ENCODE measurements at regions of chr20 and their contacts with region 1.

Region 1: GRCh38 chr20:49982346-49983122 is at the start of gene SNAI1:
- DNase-seq: no peak
- H3K4me3 ChIP-seq: peak within 1 kb of the TSS; percentile 44 to 55
- H3K27ac ChIP-seq: peak within 1 kb of the TSS; percentile 55
- H3K4me1 ChIP-seq: peaks cover 58% of the 10 kb centered on the region
- H3K27me3 ChIP-seq: no peaks in the 10 kb centered on the region
- CTCF ChIP-seq: peak in 2 of 3 experiments; percentile 19 to 42
- POLR2A ChIP-seq: peak in 1 of 2 donors; percentile 76
- total RNA-seq, gene SNAI1: 19.9 TPM

Region 2: GRCh38 chr20:50070991-50071888 is 88.7 kb after region 1 on chr20:
- intact Hi-C with region 1: loop called (anchors 2 kb)
- DNase-seq: no peak
- H3K4me3 ChIP-seq: peak overlapping the region; percentile 4 to 35
- H3K27ac ChIP-seq: peak overlapping the region; percentile 33
- H3K4me1 ChIP-seq: peaks cover 16% of the 10 kb centered on the region
- H3K27me3 ChIP-seq: no peaks in the 10 kb centered on the region
- CTCF ChIP-seq: peak; percentile 99 to 100 (median 100)
- POLR2A ChIP-seq: no peak

Region 3: DNA sequence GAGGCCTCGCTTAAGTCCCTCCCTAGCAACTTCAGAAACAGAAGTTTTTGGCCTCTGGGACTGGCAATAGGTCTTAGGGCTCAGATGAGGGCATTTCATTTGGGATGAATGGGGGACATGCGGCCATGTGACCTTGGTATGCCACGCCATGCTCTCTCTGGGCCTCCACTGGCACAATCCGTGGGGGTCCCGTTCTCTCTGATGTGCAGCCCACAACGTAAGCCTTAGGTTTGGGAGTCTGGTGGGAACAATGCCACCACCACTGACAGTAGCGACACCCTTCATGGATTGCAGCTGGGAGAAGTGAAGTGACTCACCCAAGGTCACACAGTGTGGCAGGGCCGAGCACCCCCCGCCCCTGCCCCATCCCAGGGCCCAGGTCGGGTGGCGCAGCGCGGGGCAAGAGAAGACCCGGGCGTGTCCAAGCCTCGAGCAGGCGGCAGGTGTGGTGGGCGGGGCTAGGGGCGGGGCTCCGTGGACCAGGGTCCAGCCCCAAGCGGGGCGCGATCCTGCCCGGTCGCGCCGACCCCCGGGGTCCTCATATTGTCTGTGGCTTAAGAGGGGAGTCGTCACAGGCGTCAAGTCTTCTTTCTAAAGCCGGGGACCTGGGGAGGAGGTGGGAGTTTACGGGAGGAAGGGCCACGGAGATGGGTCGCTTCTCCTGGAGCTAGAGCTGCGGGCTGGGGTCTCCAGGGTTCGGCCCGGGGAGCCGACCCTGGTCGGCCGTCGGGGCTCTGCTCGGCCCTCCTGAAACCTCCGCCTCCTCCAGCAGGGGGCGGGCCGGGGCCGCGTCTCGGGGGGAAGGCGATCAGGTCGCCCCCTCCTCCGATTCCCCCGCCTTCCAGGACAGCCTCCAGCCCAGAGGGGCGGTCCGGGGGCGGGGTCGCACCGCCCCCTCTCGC is 207.4 kb after region 1 on chr20:
- intact Hi-C with region 1: no loop called
- DNase-seq: peak in 1 of 2 donors; percentile 93
- H3K4me3 ChIP-seq: peak overlapping the region; percentile 88 to 98
- H3K27ac ChIP-seq: peak overlapping the region; percentile 100
- H3K4me1 ChIP-seq: peaks cover 46% of the 10 kb centered on the region
- H3K27me3 ChIP-seq: no peaks in the 10 kb centered on the region
- CTCF ChIP-seq: peak; percentile 68 to 97 (median 86)
- POLR2A ChIP-seq: no peak

Region 4: GRCh38 chr20:50330050-50330966 is 347.8 kb after region 1 on chr20:
- intact Hi-C with region 1: no loop called
- DNase-seq: no peak
- H3K4me3 ChIP-seq: no peak overlapping the region
- H3K27ac ChIP-seq: no peak overlapping the region
- H3K4me1 ChIP-seq: peaks cover 20% of the 10 kb centered on the region
- H3K27me3 ChIP-seq: no peaks in the 10 kb centered on the region
- CTCF ChIP-seq: no peak
- POLR2A ChIP-seq: no peak

Region 5: DNA sequence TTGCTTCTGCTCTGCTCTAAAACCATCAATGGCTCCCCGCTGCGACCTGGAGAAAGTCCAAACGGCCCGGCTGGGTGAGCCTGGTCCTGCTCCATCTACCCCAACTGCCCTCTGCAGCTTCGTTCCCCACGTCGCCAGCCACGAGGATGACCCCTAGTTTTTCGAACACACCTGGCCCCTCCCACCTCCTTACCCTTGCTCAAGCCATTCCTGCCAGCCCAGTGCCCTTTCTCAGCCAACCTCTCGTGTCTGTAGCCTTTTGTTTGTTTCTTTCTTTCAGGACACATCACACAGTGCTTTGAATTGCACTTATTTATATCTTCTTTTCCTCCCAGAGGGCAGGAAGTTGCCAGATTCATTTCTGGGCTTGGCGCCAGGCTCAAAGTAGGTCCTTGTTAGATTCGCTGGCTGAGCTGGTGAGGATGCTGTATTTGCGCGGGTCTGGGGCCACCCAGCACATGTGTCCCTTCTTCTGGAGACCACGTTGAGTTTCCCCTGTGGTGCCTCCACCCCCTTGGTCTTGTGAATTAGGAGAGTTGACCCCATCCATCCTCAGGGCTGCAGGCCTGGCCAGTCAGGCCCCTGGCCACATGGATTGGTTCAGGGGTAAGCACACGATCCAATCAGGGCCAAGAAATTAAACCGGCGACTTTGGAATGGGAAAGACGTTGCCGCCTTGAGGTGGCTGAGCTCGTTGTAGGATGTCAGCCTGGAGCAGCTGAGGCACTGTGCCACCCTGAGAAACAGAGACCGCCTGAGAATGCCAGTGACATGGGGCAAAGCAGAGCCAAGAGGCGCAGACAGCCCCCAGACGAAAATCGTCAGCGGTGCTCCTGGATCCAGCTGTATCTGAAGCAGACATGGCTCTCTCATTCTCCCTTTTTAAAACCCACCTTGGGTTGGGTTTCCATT is 364.1 kb after region 1 on chr20:
- intact Hi-C with region 1: loop called (anchors 5 kb)
- DNase-seq: no peak
- H3K4me3 ChIP-seq: no peak overlapping the region
- H3K27ac ChIP-seq: peak overlapping the region; percentile 90
- H3K4me1 ChIP-seq: peaks cover 37% of the 10 kb centered on the region
- H3K27me3 ChIP-seq: no peaks in the 10 kb centered on the region
- CTCF ChIP-seq: no peak
- POLR2A ChIP-seq: no peak